MCF 10A (cell line): ENCODE measurements at regions of chr11 and their contacts with region 1.

Region 1: GRCh38 chr11:75248690-75249268 is 8.2 kb downstream of the TPBGL start:
- DNase-seq: peak; percentile 86
- H3K4me3 Mint-ChIP-seq: no peak overlapping the region
- H3K27ac Mint-ChIP-seq: no peak overlapping the region
- H3K4me1 Mint-ChIP-seq: no peaks in the 10 kb centered on the region
- H3K27me3 Mint-ChIP-seq: peaks cover 67% of the 10 kb centered on the region
- CTCF ChIP-seq: peak; percentile 99

Region 2: GRCh38 chr11:74929431-74930363 is 319.1 kb before region 1 on chr11:
- CTCF ChIA-PET with region 1: interaction called, 43 read pairs
- POLR2A ChIA-PET with region 1: no interaction called
- intact Hi-C with region 1: loop called (anchors 1 kb)
- DNase-seq: peak; percentile 94
- H3K4me3 Mint-ChIP-seq: no peak overlapping the region
- H3K27ac Mint-ChIP-seq: no peak overlapping the region
- H3K4me1 Mint-ChIP-seq: peaks cover 4% of the 10 kb centered on the region
- H3K27me3 Mint-ChIP-seq: no peaks in the 10 kb centered on the region
- CTCF ChIP-seq: peak; percentile 84

Region 3: DNA sequence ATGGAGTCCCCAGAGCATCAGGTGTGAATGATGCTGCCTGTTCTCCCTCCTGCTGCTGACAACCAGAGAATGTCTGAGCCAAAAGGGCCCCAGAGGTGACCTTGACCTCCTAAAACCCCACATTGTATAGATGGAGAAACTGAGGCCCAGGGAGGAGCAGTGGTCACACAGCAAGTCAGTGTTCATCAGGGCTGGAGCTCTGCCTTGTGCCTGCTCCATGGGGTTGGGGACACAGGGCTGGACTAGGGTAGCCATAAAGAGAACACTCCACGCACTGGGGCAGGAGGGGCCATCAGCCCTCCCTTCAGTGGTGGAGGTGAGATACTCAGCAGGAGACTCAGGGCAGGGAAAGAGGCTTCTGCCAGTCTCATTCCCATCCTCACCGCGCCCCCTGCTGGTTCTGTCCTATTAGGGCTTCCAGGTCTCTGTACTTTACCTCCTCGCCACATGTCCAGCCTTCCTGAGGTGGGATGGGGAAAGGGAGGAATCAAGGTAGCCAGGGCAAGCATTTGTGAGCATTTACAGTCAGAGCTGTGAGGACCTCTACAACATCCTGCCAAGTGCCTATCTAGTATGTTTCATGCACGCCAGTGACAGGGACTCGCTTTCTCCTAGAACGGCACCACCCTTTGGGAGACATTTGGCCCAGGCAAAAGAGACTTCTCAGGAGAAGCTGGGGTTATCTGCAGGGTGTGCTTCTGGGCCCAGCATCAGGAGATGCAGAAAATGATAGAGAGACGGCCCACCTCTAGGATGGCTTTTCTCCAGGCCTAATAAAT is 216.8 kb before region 1 on chr11:
- CTCF ChIA-PET with region 1: interaction called, 18 read pairs
- POLR2A ChIA-PET with region 1: no interaction called
- intact Hi-C with region 1: no loop called
- DNase-seq: peak; percentile 77
- H3K4me3 Mint-ChIP-seq: no peak overlapping the region
- H3K27ac Mint-ChIP-seq: no peak overlapping the region
- H3K4me1 Mint-ChIP-seq: peaks cover 16% of the 10 kb centered on the region
- H3K27me3 Mint-ChIP-seq: peaks cover 13% of the 10 kb centered on the region
- CTCF ChIP-seq: peak; percentile 63

Region 4: DNA sequence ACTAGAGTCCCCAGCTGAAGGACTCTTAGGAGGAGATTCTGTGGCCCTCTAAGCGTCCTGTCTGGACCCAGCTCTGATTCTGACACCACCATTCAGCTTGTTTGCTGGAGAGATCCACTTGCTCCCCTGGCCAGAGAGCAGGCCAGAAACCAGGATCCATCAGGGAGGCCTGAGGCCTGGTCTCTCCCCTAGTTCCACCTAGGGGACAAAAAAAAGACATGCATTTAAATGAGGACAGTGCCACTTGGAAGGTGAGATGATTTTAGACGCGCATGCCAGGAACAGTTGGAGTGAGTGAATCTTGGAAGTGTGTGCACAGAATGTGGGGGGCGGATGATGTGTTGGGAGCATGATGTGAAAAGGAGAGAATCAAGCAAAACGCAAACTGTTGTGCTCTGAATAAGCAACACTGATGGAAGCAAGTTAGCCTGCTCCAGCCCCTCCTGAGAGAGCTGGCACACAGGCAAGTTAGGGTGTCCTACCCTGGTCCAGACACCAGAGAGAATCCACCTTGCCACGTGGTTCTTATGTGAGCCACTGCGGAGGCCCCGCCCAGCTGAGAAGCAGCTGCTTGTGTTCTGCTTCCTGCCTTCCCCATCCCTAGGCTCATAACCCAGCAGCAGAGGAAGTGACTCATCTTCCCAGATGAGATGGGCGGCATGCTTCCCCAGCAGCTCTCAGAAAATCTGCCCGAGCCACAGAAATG is 105.9 kb before region 1 on chr11:
- CTCF ChIA-PET with region 1: interaction called, 251 read pairs
- POLR2A ChIA-PET with region 1: interaction called, 4 read pairs
- intact Hi-C with region 1: loop called (anchors 1 kb)
- DNase-seq: peak; percentile 90
- H3K4me3 Mint-ChIP-seq: no peak overlapping the region
- H3K27ac Mint-ChIP-seq: peak overlapping the region; percentile 53
- H3K4me1 Mint-ChIP-seq: peaks cover 16% of the 10 kb centered on the region
- H3K27me3 Mint-ChIP-seq: peaks cover 16% of the 10 kb centered on the region
- CTCF ChIP-seq: no peak

Region 5: DNA sequence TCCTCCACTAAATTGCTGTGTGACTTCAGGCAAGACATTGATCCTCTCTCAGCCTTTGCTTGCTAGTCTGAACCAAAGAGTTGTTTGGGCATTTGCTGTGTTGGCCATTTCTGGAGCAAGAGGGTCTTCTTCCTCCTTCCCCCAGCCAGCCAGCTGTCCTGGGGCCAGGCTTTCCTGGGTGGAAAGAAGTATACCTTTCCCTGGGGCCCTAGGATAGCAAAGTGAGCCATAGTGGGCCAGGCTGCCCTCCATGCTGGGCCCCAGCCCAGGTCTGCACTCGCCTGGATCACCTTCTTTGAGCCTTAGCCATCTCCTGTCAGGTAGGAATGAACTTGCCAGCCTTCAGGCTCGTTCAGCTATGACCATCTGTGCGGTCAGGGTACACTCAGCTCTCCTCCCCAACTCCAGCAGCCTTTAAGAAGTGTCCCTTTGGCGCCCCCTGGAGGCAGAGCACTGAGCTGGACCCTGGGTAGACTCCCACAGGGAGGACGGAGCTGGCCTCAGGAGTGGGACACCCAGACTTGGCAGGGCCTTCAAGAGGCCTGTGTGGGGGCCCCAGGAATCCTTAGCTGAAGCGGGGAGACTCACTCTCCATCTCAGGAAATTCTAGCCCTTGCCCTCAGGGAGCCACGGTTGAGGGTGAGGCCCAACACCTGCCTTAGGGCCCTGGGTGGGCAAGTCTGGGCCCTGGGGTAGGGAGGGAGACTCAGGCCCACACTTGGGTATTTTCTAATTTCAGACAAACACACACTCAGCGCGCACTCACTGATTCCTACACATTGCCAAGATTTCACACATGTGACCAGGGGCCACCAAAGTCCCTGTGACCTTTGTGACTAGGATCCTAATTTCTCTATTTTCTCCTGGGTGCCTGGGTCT is 43.9 kb before region 1 on chr11:
- CTCF ChIA-PET with region 1: interaction called, 25 read pairs
- POLR2A ChIA-PET with region 1: no interaction called
- intact Hi-C with region 1: no loop called
- DNase-seq: peak; percentile 83
- H3K4me3 Mint-ChIP-seq: no peak overlapping the region
- H3K27ac Mint-ChIP-seq: no peak overlapping the region
- H3K4me1 Mint-ChIP-seq: no peaks in the 10 kb centered on the region
- H3K27me3 Mint-ChIP-seq: peaks cover 32% of the 10 kb centered on the region
- CTCF ChIP-seq: peak; percentile 83

Region 6: GRCh38 chr11:75233742-75234172 is 15.0 kb before region 1 on chr11:
- CTCF ChIA-PET with region 1: interaction called, 10 read pairs
- POLR2A ChIA-PET with region 1: no interaction called
- intact Hi-C with region 1: no loop called
- DNase-seq: peak; percentile 72
- H3K4me3 Mint-ChIP-seq: no peak overlapping the region
- H3K27ac Mint-ChIP-seq: no peak overlapping the region
- H3K4me1 Mint-ChIP-seq: no peaks in the 10 kb centered on the region
- H3K27me3 Mint-ChIP-seq: peaks cover 26% of the 10 kb centered on the region
- CTCF ChIP-seq: no peak